ENCODE measurements at regions of chr1 and their contacts with region 1.

Region 1: DNA sequence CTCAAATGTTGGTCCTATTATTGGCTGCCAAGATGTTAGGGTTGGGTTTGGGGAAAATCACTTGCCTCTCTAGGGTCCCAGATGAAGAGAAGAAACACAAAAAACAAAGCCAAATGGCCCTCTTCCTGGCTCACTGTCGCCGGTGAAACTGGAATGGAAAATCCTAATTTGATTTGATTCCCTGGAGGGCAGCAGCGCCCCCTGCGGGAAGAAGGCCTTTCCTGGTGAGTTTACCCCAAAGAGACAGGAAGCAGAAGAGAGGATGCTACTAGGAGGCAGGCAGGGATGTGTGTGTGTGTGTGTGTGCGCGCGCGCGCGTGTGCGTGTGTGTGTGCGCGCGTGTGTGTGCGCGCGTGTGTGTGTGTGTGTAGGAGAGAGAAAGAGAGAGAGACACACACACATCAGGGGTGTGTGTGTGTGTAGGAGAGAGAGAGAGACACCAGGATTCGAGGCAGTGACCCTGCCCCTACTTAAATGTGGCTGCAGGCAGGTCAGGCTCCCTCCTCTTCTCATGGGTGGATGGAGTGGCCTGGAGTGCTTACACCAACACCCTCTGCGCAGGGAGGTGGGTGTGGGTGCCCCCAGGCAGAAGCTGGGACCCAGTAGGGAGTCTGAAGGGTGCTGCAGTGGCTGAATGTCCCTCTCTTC is 3.1 kb upstream of the SELENON start:
- DNase-seq: peak; percentile 78 to 87 (median 81)
- H3K4me3 ChIP-seq: peak overlapping the region in 1 of 2 donors; percentile 44
- H3K4me3 Mint-ChIP-seq: peak overlapping the region; percentile 58 to 88 (median 80)
- H3K27ac ChIP-seq: peak overlapping the region; percentile 45
- H3K27ac Mint-ChIP-seq: peak overlapping the region; percentile 86 to 98 (median 95)
- H3K4me1 ChIP-seq: peaks cover 54% of the 10 kb centered on the region
- H3K4me1 Mint-ChIP-seq: peaks cover 32 to 66% (median 49%) of the 10 kb centered on the region in 4 donors
- H3K27me3 ChIP-seq: no peaks in the 10 kb centered on the region
- H3K27me3 Mint-ChIP-seq: peaks cover 0 to 2% of the 10 kb centered on the region in 2 donors

Region 2: DNA sequence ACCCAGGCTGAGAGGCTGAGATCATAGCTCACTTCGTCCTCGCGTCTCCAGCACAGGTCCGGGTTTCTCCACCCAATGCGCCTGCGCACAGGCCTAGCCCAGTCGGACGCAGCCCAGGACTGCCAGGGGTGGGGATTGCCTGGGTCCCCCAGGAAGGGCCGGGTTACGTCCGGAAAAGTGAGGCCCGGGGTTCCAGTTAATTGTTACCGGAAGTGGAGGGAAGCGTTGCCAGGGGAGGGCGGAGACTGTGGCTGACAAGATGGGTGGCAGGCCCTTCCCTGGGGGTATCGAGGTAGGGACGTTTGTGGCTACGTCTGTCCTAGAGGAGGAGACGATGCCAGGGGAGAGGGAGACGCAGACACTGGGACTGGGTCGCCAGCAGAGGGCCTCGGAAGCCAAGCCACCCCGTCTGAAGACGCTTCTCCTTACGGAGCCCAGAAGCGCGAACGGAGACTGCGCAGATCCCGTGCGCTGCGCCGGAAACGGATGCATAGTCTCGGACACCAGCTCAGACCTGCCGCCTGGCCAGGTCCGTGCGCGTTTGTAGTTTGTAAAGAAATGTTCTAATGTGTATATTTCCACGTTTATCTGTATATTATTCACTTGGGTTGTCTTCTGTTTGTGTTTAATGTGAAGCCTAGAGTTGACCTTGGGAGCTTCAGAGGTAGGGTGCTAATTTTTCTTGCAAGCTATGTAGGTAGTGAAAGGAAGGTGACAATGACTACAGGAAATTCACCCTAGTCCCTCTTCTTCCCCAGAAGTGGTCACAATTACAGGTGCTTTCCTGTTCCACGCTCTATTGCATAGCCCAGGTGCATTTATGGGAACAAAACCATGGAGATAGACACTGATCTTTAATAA is 557.0 kb before region 1 on chr1:
- CTCF ChIA-PET with region 1: no interaction called
- POLR2A ChIA-PET with region 1: no interaction called
- intact Hi-C with region 1: loop called (anchors 10 kb)
- DNase-seq: peak; percentile 84 to 92 (median 84)
- H3K4me3 ChIP-seq: peak overlapping the region; percentile 19 to 69
- H3K4me3 Mint-ChIP-seq: peak overlapping the region; percentile 88 to 92 (median 90)
- H3K27ac ChIP-seq: peak overlapping the region; percentile 77
- H3K27ac Mint-ChIP-seq: peak overlapping the region; percentile 94 to 100 (median 96)
- H3K4me1 ChIP-seq: peaks cover 65% of the 10 kb centered on the region
- H3K4me1 Mint-ChIP-seq: peaks cover 32 to 63% (median 44%) of the 10 kb centered on the region in 4 donors
- H3K27me3 ChIP-seq: no peaks in the 10 kb centered on the region
- H3K27me3 Mint-ChIP-seq: no peaks in the 10 kb centered on the region

Region 3: GRCh38 chr1:25675729-25676476 is 121.0 kb before region 1 on chr1:
- CTCF ChIA-PET with region 1: interaction called, 6 read pairs
- POLR2A ChIA-PET with region 1: interaction called, 4 read pairs
- intact Hi-C with region 1: loop called (anchors 5 kb)
- DNase-seq: peak; percentile 74 to 83 (median 78)
- H3K4me3 ChIP-seq: peak overlapping the region in 1 of 2 donors; percentile 18
- H3K4me3 Mint-ChIP-seq: peak overlapping the region; percentile 74 to 89 (median 85)
- H3K27ac ChIP-seq: no peak overlapping the region
- H3K27ac Mint-ChIP-seq: peak overlapping the region; percentile 85 to 95 (median 92)
- H3K4me1 ChIP-seq: peaks cover 71% of the 10 kb centered on the region
- H3K4me1 Mint-ChIP-seq: peaks cover 66 to 88% (median 77%) of the 10 kb centered on the region in 4 donors
- H3K27me3 ChIP-seq: no peaks in the 10 kb centered on the region
- H3K27me3 Mint-ChIP-seq: no peaks in the 10 kb centered on the region

Region 4: DNA sequence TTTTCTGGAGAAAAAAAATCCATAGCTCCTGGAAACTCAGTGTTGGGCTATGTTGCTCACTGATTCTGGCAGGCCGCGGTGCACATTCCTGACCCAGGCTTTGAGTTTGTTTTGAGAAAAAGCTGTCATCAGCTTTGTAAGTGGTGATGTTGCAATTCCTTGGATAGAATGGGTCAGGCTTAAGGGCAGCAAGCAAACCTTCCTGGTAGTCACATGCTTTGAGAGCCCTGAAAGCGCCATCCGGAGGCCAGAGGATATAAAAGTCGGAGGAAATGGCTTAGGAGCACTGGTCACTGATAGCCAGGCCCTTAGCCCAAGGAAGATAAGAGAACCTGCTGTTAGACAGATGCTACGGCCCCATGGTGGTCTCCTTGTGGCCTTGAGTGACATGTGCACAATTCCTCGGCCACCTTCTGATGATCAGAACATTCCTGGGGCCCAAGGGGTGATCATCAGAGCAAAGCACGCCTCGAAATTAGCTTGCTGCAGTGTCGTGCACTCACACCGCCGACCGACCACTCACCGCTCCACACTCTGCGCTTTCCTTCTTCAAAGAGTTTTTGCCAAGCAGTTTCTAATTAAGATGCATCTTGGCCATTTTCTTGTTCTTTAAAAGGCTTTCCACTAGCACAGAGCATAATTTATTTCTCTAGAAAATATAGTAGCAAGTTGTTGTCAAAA is 101.7 kb before region 1 on chr1:
- CTCF ChIA-PET with region 1: interaction called, 3 read pairs
- POLR2A ChIA-PET with region 1: no interaction called
- intact Hi-C with region 1: loop called (anchors 1 kb)
- DNase-seq: no peak
- H3K4me3 ChIP-seq: no peak overlapping the region
- H3K4me3 Mint-ChIP-seq: no peak overlapping the region
- H3K27ac ChIP-seq: no peak overlapping the region
- H3K27ac Mint-ChIP-seq: peak overlapping the region in 2 of 7 donors; percentile 15 to 38
- H3K4me1 ChIP-seq: peaks cover 25% of the 10 kb centered on the region
- H3K4me1 Mint-ChIP-seq: peaks cover 22 to 67% (median 29%) of the 10 kb centered on the region in 4 donors
- H3K27me3 ChIP-seq: no peaks in the 10 kb centered on the region
- H3K27me3 Mint-ChIP-seq: no peaks in the 10 kb centered on the region

Region 5: GRCh38 chr1:25785333-25786067 is 11.4 kb before region 1 on chr1:
- CTCF ChIA-PET with region 1: no interaction called
- POLR2A ChIA-PET with region 1: no interaction called
- intact Hi-C with region 1: no loop called
- DNase-seq: no peak
- H3K4me3 ChIP-seq: no peak overlapping the region
- H3K4me3 Mint-ChIP-seq: no peak overlapping the region
- H3K27ac ChIP-seq: no peak overlapping the region
- H3K27ac Mint-ChIP-seq: peak overlapping the region in 2 of 7 donors; percentile 29 to 70
- H3K4me1 ChIP-seq: no peaks in the 10 kb centered on the region
- H3K4me1 Mint-ChIP-seq: peaks cover 0 to 4% (median 2%) of the 10 kb centered on the region in 4 donors
- H3K27me3 ChIP-seq: no peaks in the 10 kb centered on the region
- H3K27me3 Mint-ChIP-seq: no peaks in the 10 kb centered on the region

Region 6: DNA sequence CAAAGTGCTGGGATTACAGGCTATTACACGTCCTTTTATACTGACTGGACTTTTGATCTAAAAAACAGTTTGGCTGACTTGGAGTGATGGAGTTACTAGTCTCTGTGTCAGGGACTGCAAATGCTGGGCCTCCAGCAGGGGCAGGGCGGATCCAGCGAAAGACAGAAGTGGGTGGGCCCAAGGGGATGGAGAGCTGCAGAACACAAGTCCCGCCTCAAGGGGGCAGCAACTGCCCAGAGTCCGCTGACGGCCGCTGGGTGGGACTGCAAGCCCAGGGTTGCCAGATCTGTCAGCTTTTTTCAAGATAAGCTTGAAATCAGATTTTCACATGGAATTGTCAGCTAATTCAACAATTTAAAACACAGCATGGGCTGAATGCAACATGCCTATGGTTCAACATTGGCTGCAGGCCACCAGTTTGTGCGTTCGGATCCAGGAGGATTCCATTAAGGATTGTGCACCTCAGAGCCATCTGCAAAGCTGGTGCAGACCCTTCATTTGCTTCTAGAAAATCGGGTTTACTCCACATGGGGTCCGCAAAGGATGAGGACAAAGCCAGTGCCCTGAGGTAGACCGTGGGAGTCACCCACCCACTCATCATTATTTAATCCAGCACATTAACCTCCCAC is 98.5 kb after region 1 on chr1:
- CTCF ChIA-PET with region 1: no interaction called
- POLR2A ChIA-PET with region 1: no interaction called
- intact Hi-C with region 1: no loop called
- DNase-seq: peak; percentile 89 to 92 (median 91)
- H3K4me3 ChIP-seq: no peak overlapping the region
- H3K4me3 Mint-ChIP-seq: peak overlapping the region in 1 of 8 donors; percentile 23
- H3K27ac ChIP-seq: no peak overlapping the region
- H3K27ac Mint-ChIP-seq: peak overlapping the region in 6 of 7 donors; percentile 4 to 73 (median 58)
- H3K4me1 ChIP-seq: peaks cover 10% of the 10 kb centered on the region
- H3K4me1 Mint-ChIP-seq: peaks cover 4 to 9% (median 7%) of the 10 kb centered on the region in 4 donors
- H3K27me3 ChIP-seq: no peaks in the 10 kb centered on the region
- H3K27me3 Mint-ChIP-seq: no peaks in the 10 kb centered on the region